ENCODE measurements at regions of chr6 and their contacts with region 1.

Region 1: DNA sequence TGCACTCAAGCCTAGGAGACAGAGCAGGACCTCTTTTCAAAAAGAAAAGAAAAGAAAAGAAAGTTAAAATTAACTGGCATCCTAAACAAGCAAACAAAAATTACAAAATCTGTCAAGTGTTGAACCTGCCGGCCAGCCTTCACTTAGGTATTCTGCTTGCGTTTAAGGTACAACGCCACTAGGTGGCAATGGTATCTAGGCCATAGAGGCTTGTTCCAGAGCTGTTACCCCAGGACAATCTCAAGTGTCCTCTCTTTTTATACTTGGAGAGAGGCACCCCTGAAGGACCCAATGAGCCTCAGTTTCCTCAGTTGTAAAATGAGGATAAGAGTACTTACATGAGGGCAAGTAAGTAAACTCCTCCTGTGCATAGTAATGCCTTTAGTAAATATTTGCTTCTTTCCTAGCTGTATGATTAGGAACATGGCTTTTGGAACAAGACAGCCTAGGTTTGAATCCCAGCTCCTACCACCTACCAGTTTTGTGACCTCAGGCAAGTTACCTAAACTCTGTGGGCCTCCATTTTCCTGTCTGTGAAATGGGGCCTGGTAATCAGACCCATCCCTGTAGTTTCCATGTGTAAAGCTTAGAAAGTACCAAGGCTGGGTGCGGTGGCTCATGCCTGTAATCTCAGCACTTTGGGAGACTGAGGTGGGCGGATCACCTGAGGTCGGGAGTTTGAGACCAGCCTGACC is 5.8 kb upstream of the PACSIN1 start:
- DNase-seq: peak; percentile 65
- H3K4me3 Mint-ChIP-seq: no peak overlapping the region
- H3K27ac Mint-ChIP-seq: no peak overlapping the region
- H3K4me1 Mint-ChIP-seq: no peaks in the 10 kb centered on the region
- H3K27me3 Mint-ChIP-seq: peaks cover 49% of the 10 kb centered on the region

Region 2: GRCh38 chr6:34526992-34527728 is 67.1 kb after region 1 on chr6:
- CTCF ChIA-PET with region 1: interaction called, 10 read pairs
- DNase-seq: peak; percentile 97
- H3K4me3 Mint-ChIP-seq: no peak overlapping the region
- H3K27ac Mint-ChIP-seq: peak overlapping the region; percentile 16
- H3K4me1 Mint-ChIP-seq: peaks cover 8% of the 10 kb centered on the region
- H3K27me3 Mint-ChIP-seq: peaks cover 14% of the 10 kb centered on the region

Measured in activated naive CD4-positive, alpha-beta T cell treated with anti-CD3 and anti-CD28 coated beads, Interleukin-2, amount 10 ng/mL, durations not matched to agents 7 days and 5 days (primary cell).